Cardiac septum (tissue), 1 donor: ENCODE measurements at regions of chr2 and their contacts with region 1.

Region 1: DNA sequence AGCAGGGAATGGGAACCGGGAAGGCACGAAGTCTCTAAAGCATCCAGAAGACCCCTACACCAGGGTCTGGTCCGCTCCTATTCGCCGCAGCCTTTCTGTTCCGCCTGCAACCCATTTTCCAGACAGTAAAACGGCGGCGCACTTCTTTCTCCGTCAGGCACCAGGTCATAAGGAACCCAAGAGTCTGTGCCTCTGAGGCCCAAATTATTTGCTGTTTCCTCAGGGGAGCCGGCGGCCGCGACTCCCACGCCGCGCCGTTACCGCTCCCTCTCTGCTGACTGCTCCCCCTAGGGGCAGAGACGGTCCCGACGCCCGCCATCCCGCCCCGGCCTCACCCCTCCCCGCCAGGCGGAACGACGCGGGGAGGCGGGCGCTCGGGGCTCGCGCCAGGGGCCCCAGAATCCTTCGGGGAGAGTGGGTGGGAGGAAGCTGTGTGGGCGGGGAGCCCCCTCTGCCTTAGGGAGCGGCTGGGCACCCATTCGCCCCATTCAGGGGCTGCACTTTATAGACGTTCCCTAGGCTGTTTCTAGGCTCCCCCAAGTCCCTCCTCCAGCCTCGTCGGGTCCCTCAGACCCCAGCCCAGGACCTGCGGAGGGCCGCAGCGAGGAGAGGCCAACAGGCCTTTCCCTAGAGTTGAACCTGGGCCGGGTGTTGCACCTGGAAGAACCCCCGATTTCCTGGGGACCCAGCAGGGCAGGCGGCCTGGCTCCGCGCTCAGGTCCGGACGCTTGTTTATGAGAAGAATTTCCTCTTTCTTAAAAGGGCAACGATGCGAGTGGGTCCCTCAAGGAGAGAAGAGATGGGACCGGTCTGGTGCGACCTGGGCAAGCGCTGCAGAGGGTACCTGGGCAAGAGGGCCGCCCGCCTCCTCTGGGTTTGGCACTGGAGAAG is 3.6 kb upstream of the CTDSP1 start:
- DNase-seq: peak; percentile 97

Region 2: GRCh38 chr2:218216674-218217359 is 179.2 kb before region 1 on chr2 and contains the start of gene ARPC2:
- intact Hi-C with region 1: loop called (anchors 1 kb)
- DNase-seq: peak; percentile 99
- total RNA-seq, gene ARPC2: 172 TPM

Region 3: GRCh38 chr2:218286570-218287459 is 109.2 kb before region 1 on chr2:
- intact Hi-C with region 1: loop called (anchors 1 kb)
- DNase-seq: peak; percentile 94

Region 4: DNA sequence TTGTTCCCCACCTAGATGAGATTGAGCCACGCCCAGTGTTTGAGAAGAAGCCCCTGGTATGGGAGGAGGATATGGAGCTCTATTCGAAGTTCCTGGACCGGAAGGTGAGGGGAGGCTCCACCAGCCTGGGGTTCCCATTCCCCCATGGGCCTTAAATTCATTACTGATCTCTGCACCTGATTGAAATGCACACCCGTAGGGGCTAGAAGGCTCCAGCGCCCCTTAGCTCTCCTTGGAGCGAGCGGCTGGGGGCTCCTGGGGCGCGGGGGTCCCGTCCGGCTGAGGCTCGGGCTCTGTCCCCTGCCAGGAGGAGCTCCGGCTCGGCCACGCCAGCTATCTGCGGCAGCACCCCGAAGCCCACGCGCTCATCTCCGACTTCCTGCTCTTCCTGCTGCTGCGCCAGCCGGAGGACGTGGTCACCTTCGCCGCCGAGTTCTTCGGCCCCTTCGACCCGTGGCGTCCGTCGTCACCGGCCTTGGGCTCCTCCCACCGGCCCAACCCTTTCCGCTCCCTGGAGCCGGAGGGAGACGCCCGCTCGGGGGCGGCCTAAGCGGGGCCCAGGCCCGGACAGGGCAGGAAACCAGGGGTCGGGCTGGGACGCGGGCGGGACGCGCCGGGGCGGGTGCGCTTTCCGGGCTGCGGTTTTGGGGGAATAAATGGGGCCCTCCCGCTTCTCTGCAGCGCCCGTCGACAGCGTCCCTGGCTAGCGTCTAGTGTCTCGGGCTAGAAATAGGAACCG is 28.5 kb before region 1 on chr2:
- intact Hi-C with region 1: loop called (anchors 2 kb)
- DNase-seq: peak; percentile 98

Region 5: GRCh38 chr2:218568190-218569037 is 172.4 kb after region 1 on chr2 and contains the starts of genes CNOT9 and USP37:
- intact Hi-C with region 1: loop called (anchors 5 kb)
- DNase-seq: peak; percentile 100
- total RNA-seq, gene CNOT9: 20.9 TPM
- total RNA-seq, gene USP37: 7.1 TPM

Region 6: GRCh38 chr2:218607436-218608115 is 211.5 kb after region 1 on chr2 and contains the start of gene PLCD4:
- intact Hi-C with region 1: no loop called
- DNase-seq: no peak
- total RNA-seq, gene PLCD4: 0.67 TPM